ENCODE measurements at regions of chr10 and their contacts with region 1.

Region 1: DNA sequence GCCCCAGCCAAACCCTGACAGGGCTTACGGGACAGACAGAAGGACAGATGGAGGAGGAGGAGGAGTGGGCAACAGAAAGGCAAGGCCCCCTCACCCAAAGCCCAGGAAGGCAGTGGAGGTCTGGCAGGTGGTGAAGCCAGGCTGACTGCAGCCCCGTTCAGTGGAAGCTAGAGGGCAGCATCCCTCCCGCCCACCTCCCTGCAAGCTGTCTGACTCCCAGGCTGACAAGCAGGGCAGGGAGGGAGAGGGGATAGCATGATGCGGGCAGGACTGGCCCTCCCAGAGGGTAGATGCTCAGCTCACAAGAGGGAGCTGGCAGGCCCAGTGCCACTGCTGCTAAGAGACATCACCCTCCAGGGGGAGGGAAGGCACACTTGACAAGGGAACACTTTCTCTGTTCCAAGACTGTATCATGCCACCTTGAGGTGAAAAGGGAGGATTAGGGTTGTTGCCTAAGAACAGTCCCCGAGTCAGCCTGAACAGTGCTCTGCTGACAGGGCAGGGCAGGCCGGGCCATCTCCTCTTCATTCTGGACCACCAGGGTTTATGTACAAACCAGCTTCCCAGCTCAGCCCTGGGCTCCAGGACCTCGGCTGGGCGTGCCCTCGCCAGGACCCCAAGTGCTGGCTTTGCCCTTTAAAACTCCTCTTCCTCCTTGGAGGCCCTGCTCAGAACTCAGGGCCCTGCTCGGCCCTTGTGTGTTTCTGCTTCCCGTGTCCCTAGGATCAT is 61.8 kb downstream of the RASGEF1A start:
- DNase-seq: peak; percentile 78
- ATAC-seq: peak; percentile 68
- H3K4me3 Mint-ChIP-seq: no peak overlapping the region
- H3K27ac Mint-ChIP-seq: no peak overlapping the region
- H3K4me1 Mint-ChIP-seq: peaks cover 8% of the 10 kb centered on the region
- H3K27me3 Mint-ChIP-seq: no peaks in the 10 kb centered on the region

Region 2: DNA sequence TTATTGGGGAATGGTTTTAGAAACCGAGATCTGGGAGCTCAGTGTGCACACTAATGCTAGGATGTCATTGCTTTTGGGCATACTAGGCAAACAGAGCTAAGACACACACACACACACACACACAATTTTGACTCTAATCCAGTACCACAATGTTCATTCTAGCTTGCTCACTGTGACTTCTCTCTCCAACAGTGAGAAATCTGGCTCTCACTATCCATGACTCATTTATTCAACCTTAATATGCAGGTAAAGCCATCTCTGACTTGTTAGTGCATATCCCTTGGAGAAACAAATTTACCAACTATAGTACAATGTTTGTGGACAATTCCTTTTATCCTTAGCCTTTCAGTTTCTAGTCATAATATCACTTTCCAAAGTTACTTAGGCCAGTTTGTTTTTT is 428.4 kb before region 1 on chr10:
- CTCF ChIA-PET with region 1: no interaction called
- DNase-seq: no peak
- ATAC-seq: no peak
- H3K4me3 Mint-ChIP-seq: no peak overlapping the region
- H3K27ac Mint-ChIP-seq: no peak overlapping the region
- H3K4me1 Mint-ChIP-seq: peaks cover 8% of the 10 kb centered on the region
- H3K27me3 Mint-ChIP-seq: peaks cover 12% of the 10 kb centered on the region

Region 3: GRCh38 chr10:42952349-42952748 is 252.8 kb before region 1 on chr10:
- CTCF ChIA-PET with region 1: no interaction called
- DNase-seq: peak; percentile 39
- ATAC-seq: no peak
- H3K4me3 Mint-ChIP-seq: no peak overlapping the region
- H3K27ac Mint-ChIP-seq: no peak overlapping the region
- H3K4me1 Mint-ChIP-seq: no peaks in the 10 kb centered on the region
- H3K27me3 Mint-ChIP-seq: peaks cover 10% of the 10 kb centered on the region

Region 4: DNA sequence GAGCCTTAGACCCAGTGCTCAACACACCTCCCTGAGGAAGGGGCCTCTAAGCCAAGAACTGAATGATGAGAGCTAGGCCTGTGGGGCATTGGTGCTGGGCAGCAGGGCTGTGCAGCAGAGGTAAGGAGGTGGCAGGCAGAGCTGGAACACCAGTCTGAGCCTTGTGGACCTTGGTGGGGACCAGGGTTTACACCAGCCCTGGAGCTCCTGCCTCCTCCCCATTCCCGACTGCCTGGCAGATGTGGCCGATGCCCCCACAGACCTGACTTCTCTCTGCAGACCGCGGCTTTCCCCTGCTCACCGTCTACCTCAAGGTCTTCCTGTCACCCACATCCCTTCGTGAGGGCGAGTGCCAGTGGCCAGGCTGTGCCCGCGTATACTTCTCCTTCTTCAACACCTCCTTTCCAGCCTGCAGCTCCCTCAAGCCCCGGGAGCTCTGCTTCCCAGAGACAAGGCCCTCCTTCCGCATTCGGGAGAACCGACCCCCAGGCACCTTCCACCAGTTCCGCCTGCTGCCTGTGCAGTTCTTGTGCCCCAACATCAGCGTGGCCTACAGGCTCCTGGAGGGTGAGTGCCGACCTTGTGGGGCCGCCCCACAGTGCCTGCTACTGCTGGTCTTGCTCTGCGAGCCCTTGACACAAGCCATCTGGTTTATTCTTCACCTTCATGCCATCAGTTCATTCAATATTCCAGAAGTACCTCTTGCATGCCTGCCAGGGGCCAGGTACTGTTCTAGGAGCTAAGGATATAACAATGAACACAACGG is 102.9 kb before region 1 on chr10:
- CTCF ChIA-PET with region 1: no interaction called
- DNase-seq: no peak
- ATAC-seq: no peak
- H3K4me3 Mint-ChIP-seq: no peak overlapping the region
- H3K27ac Mint-ChIP-seq: no peak overlapping the region
- H3K4me1 Mint-ChIP-seq: peaks cover 26% of the 10 kb centered on the region
- H3K27me3 Mint-ChIP-seq: peaks cover 28% of the 10 kb centered on the region

Region 5: GRCh38 chr10:43120929-43121314 is 84.2 kb before region 1 on chr10:
- CTCF ChIA-PET with region 1: interaction called, 10 read pairs
- DNase-seq: peak; percentile 94
- ATAC-seq: peak; percentile 97
- H3K4me3 Mint-ChIP-seq: peak overlapping the region; percentile 36
- H3K27ac Mint-ChIP-seq: peak overlapping the region; percentile 97
- H3K4me1 Mint-ChIP-seq: peaks cover 50% of the 10 kb centered on the region
- H3K27me3 Mint-ChIP-seq: no peaks in the 10 kb centered on the region

Region 6: DNA sequence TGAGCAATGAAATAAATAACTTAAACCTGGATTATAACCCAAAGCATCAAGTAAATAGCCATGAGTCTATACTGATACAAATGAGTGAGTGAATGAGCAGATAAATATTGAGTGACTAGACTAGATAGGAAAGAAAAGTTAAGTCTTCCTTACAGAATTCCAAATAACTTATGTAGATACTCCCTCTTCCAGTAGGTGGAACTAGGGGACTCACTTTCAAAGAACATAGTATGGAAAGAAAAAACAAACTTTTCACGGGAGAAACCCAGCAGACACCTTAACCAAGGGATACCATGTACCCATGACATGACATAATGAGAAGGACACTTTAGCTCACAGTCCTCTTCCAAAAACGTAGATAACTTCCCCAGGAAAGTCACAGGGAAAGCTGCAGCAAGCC is 34.6 kb before region 1 on chr10:
- CTCF ChIA-PET with region 1: interaction called, 25 read pairs
- DNase-seq: no peak
- ATAC-seq: no peak
- H3K4me3 Mint-ChIP-seq: no peak overlapping the region
- H3K27ac Mint-ChIP-seq: no peak overlapping the region
- H3K4me1 Mint-ChIP-seq: peaks cover 36% of the 10 kb centered on the region
- H3K27me3 Mint-ChIP-seq: no peaks in the 10 kb centered on the region

Region 7: DNA sequence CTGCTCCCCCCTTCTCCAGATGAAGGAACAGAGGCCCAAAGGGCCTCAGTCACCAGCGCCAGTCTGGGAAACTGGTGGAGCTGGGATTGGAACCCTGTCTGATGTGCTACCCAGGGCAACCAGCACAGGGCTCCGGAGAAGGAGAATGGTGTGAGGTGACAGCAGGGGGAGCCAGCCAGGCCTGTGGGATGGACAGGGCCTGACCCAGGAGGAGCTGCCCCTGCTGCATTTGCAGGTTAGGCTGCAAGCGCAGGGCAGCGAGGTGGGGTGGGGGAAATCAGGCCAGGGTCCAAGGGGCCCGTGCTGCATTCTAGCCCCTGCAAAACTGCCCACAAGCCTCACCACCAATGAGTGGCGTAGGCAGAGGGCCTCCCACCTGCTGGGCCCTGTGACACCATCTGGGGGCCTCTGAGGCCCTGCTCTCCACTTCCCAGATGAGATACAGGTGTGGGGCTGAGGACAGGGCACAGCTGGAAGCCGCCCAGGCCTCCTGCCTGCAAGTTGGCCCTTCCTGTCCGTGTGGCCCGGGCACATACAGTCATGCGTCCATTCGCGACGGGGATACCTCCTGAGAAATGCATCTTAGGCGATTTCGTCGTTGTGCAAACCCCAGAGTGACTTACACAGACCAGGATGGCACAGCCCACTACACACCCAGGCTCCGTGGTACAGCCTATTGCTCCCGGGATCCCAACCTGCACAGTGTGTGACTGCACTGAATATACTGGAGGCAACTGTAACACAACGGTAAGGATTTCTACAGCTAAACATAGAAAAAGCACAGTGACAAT is 16.5 kb after region 1 on chr10:
- CTCF ChIA-PET with region 1: interaction called, 176 read pairs
- DNase-seq: peak; percentile 46
- ATAC-seq: peak; percentile 37
- H3K4me3 Mint-ChIP-seq: no peak overlapping the region
- H3K27ac Mint-ChIP-seq: no peak overlapping the region
- H3K4me1 Mint-ChIP-seq: peaks cover 22% of the 10 kb centered on the region
- H3K27me3 Mint-ChIP-seq: peaks cover 9% of the 10 kb centered on the region

Region 8: GRCh38 chr10:43255634-43256431 is 50.7 kb after region 1 on chr10:
- CTCF ChIA-PET with region 1: interaction called, 33 read pairs
- DNase-seq: peak; percentile 75
- ATAC-seq: peak; percentile 84
- H3K4me3 Mint-ChIP-seq: no peak overlapping the region
- H3K27ac Mint-ChIP-seq: peak overlapping the region; percentile 74
- H3K4me1 Mint-ChIP-seq: peaks cover 9% of the 10 kb centered on the region
- H3K27me3 Mint-ChIP-seq: no peaks in the 10 kb centered on the region

Region 9: DNA sequence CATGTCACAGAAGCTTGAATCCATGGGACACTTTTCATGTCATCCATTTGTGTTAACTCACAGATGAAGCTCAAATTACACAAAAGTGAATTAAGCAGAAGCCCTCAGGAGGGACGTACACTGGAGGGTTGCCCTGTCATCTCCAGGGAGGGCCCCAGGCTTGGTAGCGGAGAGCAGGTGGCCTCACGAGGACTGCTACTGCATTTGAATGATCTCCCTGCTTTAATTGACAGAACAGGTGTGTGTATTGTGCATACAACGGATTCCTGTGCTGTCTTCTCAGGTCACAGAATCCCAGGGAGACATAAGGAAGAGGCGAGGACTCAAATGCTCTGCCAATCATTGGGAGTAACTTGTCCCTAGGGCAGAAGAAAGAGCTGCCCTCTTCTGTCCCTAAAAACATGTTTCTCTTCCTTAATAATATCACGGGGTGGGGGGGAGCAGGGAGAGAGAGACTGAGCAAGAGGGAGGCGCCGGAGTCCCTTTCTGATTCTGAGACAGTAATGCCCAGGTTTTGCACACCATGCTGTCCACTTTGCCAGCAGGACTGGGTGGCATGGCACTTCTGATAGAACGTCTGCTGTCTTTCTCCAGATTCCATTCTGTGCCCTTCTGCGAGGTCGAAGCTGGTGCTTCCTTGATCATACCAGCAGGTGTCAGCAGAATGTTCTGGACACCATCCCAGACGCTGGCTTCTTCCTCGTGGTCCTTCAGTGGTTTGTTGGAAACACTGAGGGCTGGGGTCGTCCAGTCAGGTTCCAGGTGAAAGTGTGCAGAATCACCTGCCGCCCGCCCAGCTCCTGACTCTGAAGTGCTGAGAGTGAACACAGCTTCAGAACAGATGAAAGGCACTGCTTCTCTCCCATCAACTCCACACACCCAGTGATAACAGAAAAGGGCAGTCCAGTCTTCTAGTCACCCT is 87.9 kb after region 1 on chr10:
- CTCF ChIA-PET with region 1: interaction called, 14 read pairs
- DNase-seq: peak; percentile 76
- ATAC-seq: peak; percentile 68
- H3K4me3 Mint-ChIP-seq: no peak overlapping the region
- H3K27ac Mint-ChIP-seq: peak overlapping the region; percentile 85
- H3K4me1 Mint-ChIP-seq: peaks cover 53% of the 10 kb centered on the region
- H3K27me3 Mint-ChIP-seq: peaks cover 3% of the 10 kb centered on the region

Region 10: GRCh38 chr10:43739161-43739560 is 534.1 kb after region 1 on chr10:
- CTCF ChIA-PET with region 1: no interaction called
- DNase-seq: no peak
- ATAC-seq: no peak
- H3K4me3 Mint-ChIP-seq: no peak overlapping the region
- H3K27ac Mint-ChIP-seq: no peak overlapping the region
- H3K4me1 Mint-ChIP-seq: peaks cover 10% of the 10 kb centered on the region
- H3K27me3 Mint-ChIP-seq: peaks cover 14% of the 10 kb centered on the region